ENCODE measurements at regions of chr20 and their contacts with region 1.

Region 1: DNA sequence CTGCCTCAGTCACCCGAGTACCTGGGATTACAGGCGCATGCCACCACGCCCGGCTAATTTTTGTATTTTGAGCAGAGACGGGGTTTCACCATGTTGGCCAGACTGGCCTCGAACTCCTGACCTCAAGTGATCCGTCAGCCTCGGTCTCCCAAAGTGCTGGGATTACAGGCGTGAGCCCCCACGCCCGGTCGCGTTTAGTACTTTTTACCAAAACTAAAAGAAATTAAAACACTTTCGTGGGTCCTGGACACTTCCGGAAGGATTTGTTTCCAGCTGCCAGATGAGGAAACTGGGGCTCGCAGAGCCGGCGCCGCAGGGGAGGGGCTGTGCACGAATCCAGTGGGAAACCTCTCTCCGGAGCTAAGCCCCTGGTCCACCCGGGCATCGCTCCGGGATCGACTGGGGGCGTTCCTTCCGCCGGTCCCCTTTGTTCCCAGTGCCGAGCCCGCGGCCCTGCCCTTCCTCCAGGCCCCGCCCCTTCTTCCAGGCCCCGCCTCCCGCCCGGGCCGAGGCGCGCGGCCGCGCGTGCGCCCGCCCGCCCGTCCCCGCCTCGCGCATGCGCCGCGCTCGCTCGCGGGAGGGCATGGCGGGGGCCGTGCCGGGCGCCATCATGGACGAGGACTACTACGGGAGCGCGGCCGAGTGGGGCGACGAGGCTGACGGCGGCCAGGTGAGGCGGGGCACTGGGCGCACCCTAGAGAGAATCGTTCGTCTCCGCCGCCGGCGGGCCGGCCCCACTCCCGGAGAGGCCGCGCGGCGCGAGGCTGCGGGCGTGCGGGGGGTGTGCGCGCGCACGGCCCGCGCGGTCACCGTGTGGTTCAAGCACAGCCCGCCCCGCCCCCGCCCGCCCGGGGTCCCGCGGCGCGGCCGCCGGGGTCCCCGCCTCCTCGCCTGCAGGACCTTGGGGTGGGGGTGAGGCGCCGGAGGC is at the start of gene NELFCD:
- DNase-seq: peak; percentile 98 to 100
- H3K4me3 ChIP-seq: peak within 1 kb of the TSS; percentile 57
- H3K4me3 Mint-ChIP-seq: peak within 1 kb of the TSS; percentile 76
- H3K27ac Mint-ChIP-seq: peak within 1 kb of the TSS; percentile 51
- H3K4me1 ChIP-seq: peaks cover 12% of the 10 kb centered on the region
- H3K4me1 Mint-ChIP-seq: peaks cover 21% of the 10 kb centered on the region
- H3K27me3 ChIP-seq: no peaks in the 10 kb centered on the region
- H3K27me3 Mint-ChIP-seq: no peaks in the 10 kb centered on the region
- CTCF ChIP-seq: no peak
- total RNA-seq, gene NELFCD: 230 TPM in 2 replicates

Region 2: GRCh38 chr20:58890518-58891085 is 90.4 kb before region 1 on chr20:
- CTCF ChIA-PET with region 1: no interaction called
- POLR2A ChIA-PET with region 1: no interaction called
- intact Hi-C with region 1: loop called (anchors 2 kb)
- DNase-seq: peak; percentile 83 to 90
- H3K4me3 ChIP-seq: peak overlapping the region; percentile 98
- H3K4me3 Mint-ChIP-seq: peak overlapping the region; percentile 99
- H3K27ac Mint-ChIP-seq: peak overlapping the region; percentile 68
- H3K4me1 ChIP-seq: peaks cover 26% of the 10 kb centered on the region
- H3K4me1 Mint-ChIP-seq: peaks cover 7% of the 10 kb centered on the region
- H3K27me3 ChIP-seq: no peaks in the 10 kb centered on the region
- H3K27me3 Mint-ChIP-seq: no peaks in the 10 kb centered on the region
- CTCF ChIP-seq: no peak

Region 3: GRCh38 chr20:58911970-58912369 is 69.0 kb before region 1 on chr20:
- CTCF ChIA-PET with region 1: no interaction called
- POLR2A ChIA-PET with region 1: no interaction called
- intact Hi-C with region 1: no loop called
- DNase-seq: no peak
- H3K4me3 ChIP-seq: no peak overlapping the region
- H3K4me3 Mint-ChIP-seq: no peak overlapping the region
- H3K27ac Mint-ChIP-seq: no peak overlapping the region
- H3K4me1 ChIP-seq: no peaks in the 10 kb centered on the region
- H3K4me1 Mint-ChIP-seq: peaks cover 4% of the 10 kb centered on the region
- H3K27me3 ChIP-seq: no peaks in the 10 kb centered on the region
- H3K27me3 Mint-ChIP-seq: no peaks in the 10 kb centered on the region
- CTCF ChIP-seq: no peak

Region 4: DNA sequence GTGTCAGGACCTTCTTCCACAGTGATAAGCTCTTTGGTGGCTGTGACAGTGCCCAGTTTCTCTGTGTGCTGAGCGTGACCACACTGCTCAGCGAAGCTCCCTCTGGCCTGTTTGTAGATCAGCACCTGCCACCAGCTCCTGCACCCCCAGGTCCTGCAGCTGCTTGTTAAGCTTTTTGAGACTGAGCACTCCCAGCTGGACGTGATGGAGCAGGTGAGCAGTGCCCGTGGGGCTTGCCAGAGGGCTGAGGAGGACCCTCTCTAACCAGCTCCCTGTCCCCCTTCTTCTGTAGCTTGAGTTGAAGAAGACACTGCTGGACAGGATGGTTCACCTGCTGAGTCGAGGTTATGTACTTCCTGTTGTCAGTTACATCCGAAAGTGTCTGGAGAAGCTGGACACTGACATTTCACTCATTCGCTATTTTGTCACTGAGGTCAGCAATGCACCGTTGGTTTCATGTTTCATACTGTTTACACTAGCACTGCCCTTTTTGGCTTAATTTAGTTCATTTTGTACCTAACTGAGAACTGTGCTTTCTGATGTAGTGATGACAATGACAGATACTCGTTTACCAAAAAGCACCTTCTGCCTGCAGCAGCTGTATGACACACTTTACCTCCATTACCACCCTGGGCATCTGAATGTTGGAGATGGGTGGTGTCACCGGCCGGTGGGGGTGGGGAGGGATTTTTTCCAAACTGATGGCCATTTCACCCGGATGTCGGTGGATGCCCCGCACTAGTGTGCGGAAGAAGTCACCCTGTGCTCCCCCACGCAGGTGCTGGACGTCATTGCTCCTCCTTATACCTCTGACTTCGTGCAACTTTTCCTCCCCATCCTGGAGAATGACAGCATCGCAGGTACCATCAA is 12.6 kb after region 1 on chr20:
- CTCF ChIA-PET with region 1: interaction called, 7 read pairs
- POLR2A ChIA-PET with region 1: interaction called, 16 read pairs
- intact Hi-C with region 1: no loop called
- DNase-seq: peak in 1 of 2 experiments; percentile 41
- H3K4me3 ChIP-seq: no peak overlapping the region
- H3K4me3 Mint-ChIP-seq: no peak overlapping the region
- H3K27ac Mint-ChIP-seq: no peak overlapping the region
- H3K4me1 ChIP-seq: peaks cover 15% of the 10 kb centered on the region
- H3K4me1 Mint-ChIP-seq: peaks cover 19% of the 10 kb centered on the region
- H3K27me3 ChIP-seq: no peaks in the 10 kb centered on the region
- H3K27me3 Mint-ChIP-seq: no peaks in the 10 kb centered on the region
- CTCF ChIP-seq: no peak

Region 5: GRCh38 chr20:59042796-59043660 is 62.1 kb after region 1 on chr20:
- CTCF ChIA-PET with region 1: no interaction called
- POLR2A ChIA-PET with region 1: interaction called, 3 read pairs
- intact Hi-C with region 1: loop called (anchors 2 kb)
- DNase-seq: peak; percentile 97 to 100
- H3K4me3 ChIP-seq: peak overlapping the region; percentile 89
- H3K4me3 Mint-ChIP-seq: peak overlapping the region; percentile 70
- H3K27ac Mint-ChIP-seq: peak overlapping the region; percentile 80
- H3K4me1 ChIP-seq: peaks cover 50% of the 10 kb centered on the region
- H3K4me1 Mint-ChIP-seq: peaks cover 36% of the 10 kb centered on the region
- H3K27me3 ChIP-seq: no peaks in the 10 kb centered on the region
- H3K27me3 Mint-ChIP-seq: no peaks in the 10 kb centered on the region
- CTCF ChIP-seq: no peak

Region 6: GRCh38 chr20:59525500-59526241 is 544.7 kb after region 1 on chr20:
- CTCF ChIA-PET with region 1: no interaction called
- POLR2A ChIA-PET with region 1: no interaction called
- intact Hi-C with region 1: no loop called
- DNase-seq: peak; percentile 86 to 91
- H3K4me3 ChIP-seq: no peak overlapping the region
- H3K4me3 Mint-ChIP-seq: no peak overlapping the region
- H3K27ac Mint-ChIP-seq: no peak overlapping the region
- H3K4me1 ChIP-seq: peaks cover 4% of the 10 kb centered on the region; the same call in 1 of the 2 replicates
- H3K4me1 Mint-ChIP-seq: no peaks in the 10 kb centered on the region
- H3K27me3 ChIP-seq: peaks cover 1% of the 10 kb centered on the region; the same call in 1 of the 2 replicates
- H3K27me3 Mint-ChIP-seq: peaks cover 65% of the 10 kb centered on the region
- CTCF ChIP-seq: peak; percentile 99 to 100

Measured in Caco-2 (cell line).